Ascending aorta (tissue), 2 donors: ENCODE measurements at regions of chr10 and their contacts with region 1.

Region 1: DNA sequence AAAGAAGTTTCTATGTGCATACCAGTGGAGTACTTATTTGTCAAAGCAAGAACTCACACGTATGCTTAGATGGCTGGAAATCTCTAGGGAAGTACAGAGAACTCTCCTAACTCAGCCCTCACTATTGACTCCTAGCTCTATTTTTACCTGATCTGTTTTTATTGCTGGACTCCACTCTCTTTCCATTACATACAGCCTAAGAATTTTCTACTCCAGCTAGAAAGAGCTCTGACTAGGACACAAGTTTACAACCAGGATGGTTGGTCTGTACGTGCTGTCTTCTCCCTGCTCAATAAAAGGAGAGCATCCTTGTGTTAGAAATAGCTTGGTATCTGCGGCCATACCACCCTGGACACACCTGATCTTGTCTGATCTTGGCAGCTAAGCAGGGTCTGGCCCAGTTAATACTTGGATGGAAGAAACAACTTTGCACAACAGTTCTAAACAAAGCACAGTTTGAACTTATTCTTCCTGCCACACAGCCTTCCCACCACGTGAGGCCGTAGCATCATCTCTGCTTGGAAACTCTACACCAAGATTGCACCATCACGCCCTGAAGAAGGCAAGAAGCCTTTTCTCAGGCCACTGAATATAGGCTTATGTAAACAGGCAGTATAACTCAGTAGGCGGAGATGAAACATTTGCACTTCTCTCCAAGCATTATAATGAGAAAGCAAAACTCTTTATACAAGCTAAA is 50.7 kb downstream of the KCNMA1 start:
- DNase-seq: peak in 1 of 2 donors; percentile 87
- H3K4me3 ChIP-seq: peak overlapping the region in 1 of 2 donors; percentile 9
- H3K27ac ChIP-seq: peak overlapping the region; percentile 87 to 91
- H3K4me1 ChIP-seq: peaks cover 12 to 55% of the 10 kb centered on the region in 2 donors
- H3K27me3 ChIP-seq: no peaks in the 10 kb centered on the region
- CTCF ChIP-seq: no peak

Region 2: GRCh38 chr10:77563638-77564270 is 23.1 kb before region 1 on chr10:
- intact Hi-C with region 1: loop called (anchors 2 kb)
- DNase-seq: no peak
- H3K4me3 ChIP-seq: no peak overlapping the region
- H3K27ac ChIP-seq: peak overlapping the region; percentile 79 to 83
- H3K4me1 ChIP-seq: peaks cover 18 to 66% of the 10 kb centered on the region in 2 donors
- H3K27me3 ChIP-seq: no peaks in the 10 kb centered on the region
- CTCF ChIP-seq: no peak

Region 3: DNA sequence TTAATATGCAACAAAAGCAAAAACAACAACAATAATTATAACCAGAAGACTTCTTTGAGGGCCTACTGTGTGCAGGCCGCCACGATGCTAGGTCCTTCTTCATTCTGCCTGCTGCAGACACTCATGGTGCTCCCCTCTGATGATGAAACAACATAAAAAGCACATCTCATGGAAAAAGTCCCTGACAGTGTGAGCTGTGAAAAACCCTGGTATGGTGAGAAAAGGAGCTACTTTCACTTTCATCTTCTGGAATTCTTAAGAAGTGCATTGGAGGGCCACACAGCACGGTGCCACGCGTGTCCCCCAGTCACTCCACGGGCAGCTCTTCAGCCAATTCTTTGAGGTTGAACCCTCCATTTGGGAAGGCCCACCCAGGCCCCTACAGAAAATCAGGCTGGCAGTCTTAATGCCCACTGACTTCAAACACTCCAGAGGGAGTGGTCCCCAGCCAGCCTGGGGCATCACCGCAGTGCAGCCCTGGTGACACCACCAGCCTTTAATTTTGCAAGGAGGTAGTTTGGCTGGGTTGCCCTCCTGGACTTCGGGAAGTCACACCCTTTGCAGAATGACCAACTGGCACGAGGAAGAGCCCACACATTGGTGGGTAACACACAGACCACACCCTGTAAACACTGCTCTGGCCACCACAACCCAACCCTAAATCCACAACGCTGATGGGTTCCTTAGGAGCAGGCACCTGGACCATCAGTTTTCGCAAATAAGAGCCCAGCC is 43.1 kb after region 1 on chr10:
- intact Hi-C with region 1: loop called (anchors 2 kb)
- DNase-seq: peak in 1 of 2 donors; percentile 62
- H3K4me3 ChIP-seq: peak overlapping the region; percentile 23 to 36
- H3K27ac ChIP-seq: peak overlapping the region; percentile 79 to 86
- H3K4me1 ChIP-seq: peaks cover 0 to 43% of the 10 kb centered on the region in 2 donors
- H3K27me3 ChIP-seq: no peaks in the 10 kb centered on the region
- CTCF ChIP-seq: no peak

Region 4: DNA sequence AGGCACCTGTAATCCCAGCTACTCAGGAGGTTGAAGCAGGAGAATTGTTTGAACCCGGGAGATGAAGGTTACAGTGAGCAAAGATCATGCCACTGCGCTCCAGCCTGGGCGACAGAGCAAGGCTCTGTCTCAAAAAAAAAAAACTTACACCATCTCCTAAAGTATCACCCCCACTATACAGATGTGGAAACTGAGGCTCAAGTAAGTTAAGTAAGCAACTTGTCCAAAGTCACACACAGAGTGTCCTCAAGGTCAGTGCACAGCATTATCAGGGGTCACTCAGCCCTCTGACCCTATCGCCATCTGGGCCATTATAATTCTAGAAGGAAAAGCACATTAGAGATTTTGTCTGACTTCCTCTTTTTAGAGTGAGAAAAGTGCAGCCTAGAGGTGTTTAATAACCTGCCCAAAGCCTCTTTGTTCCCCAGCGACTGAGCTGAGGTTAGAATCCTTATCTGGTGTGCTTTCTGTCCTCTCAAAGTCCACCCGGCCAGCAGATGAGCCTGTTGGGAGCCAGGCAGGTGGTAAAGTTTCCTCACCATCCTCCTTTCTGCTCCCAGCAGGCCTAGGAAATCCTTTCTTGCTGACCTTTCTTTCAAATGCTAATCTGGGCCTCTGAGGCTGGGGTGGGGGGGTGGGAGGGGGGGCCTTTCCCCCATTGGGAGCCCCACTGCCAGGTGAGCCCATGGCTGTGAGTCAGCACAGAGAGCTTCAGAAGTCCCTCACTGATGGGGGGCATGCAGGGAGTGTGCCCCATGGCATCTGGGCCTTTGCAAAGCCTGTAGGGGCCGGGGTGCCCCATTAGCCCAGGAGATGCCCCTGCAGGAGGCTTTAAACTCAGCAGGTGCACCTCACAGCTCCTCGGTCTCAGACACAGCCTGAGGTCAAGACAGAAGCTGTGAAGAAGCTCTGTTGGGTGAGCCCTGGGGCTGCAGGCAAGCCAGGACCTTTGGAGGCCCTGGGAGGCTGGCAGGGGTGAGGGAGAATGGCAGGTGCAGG is 62.8 kb after region 1 on chr10:
- intact Hi-C with region 1: no loop called
- DNase-seq: no peak
- H3K4me3 ChIP-seq: no peak overlapping the region
- H3K27ac ChIP-seq: no peak overlapping the region
- H3K4me1 ChIP-seq: no peaks in the 10 kb centered on the region
- H3K27me3 ChIP-seq: no peaks in the 10 kb centered on the region
- CTCF ChIP-seq: no peak